ENCODE measurements at regions of chr2 and their contacts with region 1.

Region 1: DNA sequence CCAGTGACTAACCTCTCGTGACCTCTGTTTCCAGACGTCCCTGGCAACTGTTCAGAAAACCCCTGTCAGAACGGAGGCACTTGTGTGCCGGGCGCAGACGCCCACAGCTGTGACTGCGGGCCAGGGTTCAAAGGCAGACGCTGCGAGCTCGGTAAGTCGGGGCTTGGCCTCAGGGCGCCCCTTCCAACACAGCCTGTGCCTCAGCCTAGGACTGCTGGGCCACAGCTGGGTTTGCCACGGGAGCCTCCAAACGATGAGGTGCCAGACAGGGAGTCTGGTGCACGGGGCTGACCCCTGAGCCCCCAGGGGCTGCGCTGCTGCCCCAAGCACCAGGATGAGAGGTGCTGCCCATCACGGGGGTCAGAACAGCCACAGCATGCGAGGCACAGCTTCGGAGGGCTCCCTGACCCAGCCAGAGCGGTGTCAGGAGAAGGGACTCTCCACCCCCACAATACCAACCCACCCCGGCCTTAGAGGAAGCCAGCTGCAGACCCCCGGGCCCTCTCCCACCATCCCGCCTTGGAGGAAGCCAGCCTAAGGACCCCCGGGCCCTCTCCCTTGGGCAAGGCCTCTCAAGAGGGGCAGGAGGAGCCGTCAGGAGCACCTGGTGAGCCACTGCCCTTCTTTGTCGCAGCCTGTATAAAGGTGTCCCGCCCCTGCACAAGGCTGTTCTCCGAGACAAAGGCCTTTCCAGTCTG is 20.3 kb downstream of the MTERF4 start:
- DNase-seq: no peak
- H3K4me3 ChIP-seq: no peak overlapping the region
- H3K27ac ChIP-seq: no peak overlapping the region
- H3K4me1 ChIP-seq: no peaks in the 10 kb centered on the region
- H3K27me3 ChIP-seq: no peaks in the 10 kb centered on the region
- CTCF ChIP-seq: no peak

Region 2: DNA sequence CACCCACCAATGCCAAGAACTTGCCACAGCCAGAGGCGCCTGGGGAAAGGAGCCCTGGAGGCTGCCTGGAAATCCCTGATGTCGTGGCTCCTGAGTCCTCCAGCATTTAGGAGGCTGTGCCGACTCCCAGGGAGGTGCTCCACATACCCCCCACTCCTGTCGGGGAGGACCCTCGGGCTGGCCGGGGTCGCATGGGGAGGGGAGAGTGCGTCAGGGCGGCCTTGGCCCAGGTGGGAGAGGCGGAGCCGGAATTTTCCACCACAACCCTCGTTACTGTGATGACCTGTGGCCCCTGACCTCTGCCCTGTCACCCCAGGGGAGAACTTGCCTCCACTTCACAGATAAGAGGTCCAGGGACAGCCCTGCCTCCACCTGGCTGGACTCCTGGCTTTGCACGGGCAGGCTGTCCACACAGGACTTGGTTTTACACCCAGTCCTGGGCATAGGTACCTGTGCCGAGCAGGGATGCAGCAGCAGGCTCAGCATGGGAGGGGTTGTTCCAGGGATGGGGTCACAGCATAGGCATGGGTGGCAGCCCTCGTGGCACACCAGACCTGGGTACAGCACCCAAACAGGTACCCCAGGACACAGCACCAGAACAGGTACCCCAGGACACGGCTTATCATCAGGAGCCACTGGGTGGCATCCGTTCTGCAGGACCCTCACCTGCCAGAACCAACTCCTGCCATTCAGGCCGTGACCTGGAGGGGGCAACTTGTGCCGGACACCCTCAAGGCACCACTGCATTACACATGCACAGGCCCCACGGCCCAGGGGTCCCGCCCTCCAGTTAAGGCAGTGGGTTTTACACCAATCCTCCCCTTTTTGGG is 225.4 kb before region 1 on chr2:
- CTCF ChIA-PET with region 1: no interaction called
- POLR2A ChIA-PET with region 1: no interaction called
- intact Hi-C with region 1: loop called (anchors 2 kb)
- DNase-seq: peak in 1 of 2 experiments; percentile 71
- H3K4me3 ChIP-seq: no peak overlapping the region
- H3K27ac ChIP-seq: no peak overlapping the region
- H3K4me1 ChIP-seq: 0 out of 2 replicates have a peak, but pooled peaks cover 7% of the 10 kb centered on the region
- H3K27me3 ChIP-seq: no peaks in the 10 kb centered on the region
- CTCF ChIP-seq: peak; percentile 59; the same call in 1 of the 2 replicates

Region 3: DNA sequence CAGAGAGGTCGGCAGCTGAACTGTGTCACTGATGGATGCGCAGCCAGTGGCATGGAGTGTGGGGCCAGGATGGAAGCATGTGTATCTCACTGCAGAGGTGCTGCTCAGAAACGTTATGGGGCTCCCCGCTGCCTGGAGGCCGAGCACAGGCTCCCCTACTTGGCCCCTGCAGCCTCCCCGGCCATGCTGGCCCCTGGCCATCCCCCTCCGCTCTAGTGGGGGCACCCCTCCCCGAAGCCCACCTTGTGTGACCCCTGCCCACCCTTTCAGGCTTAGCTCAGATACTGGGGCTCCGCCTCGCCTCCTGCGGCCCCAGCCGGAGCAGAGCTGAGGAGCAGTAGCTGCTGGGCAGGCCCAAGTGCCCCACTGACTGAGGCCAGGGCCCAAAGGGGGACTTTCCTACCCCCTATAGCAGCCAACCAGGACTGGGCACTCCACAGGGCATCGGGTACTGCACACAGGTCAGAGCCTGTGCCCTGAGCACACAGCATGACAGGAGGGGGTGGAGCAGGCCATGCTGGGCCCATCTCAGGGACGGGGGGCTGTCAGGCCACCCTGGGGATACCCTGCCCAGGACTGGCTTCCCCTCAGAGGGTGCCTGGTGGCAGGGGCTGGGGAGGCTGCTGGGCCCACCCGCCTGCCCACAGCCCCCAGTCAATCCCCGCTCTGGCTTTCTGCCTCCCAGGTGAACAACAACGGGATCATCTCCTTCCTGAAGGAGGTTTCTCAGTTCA is 52.0 kb before region 1 on chr2:
- CTCF ChIA-PET with region 1: no interaction called
- POLR2A ChIA-PET with region 1: no interaction called
- intact Hi-C with region 1: no loop called
- DNase-seq: no peak
- H3K4me3 ChIP-seq: no peak overlapping the region
- H3K27ac ChIP-seq: no peak overlapping the region
- H3K4me1 ChIP-seq: no peaks in the 10 kb centered on the region
- H3K27me3 ChIP-seq: 0 out of 2 replicates have a peak, but pooled peaks cover 4% of the 10 kb centered on the region
- CTCF ChIP-seq: no peak

Region 4: GRCh38 chr2:241064008-241064801 is 17.6 kb before region 1 on chr2:
- CTCF ChIA-PET with region 1: interaction called, 9 read pairs
- POLR2A ChIA-PET with region 1: interaction called, 17 read pairs
- intact Hi-C with region 1: no loop called
- DNase-seq: peak; percentile 46 to 84
- H3K4me3 ChIP-seq: peak overlapping the region; percentile 32; the same call in 1 of the 2 replicates
- H3K27ac ChIP-seq: no peak overlapping the region
- H3K4me1 ChIP-seq: peaks cover 7% of the 10 kb centered on the region
- H3K27me3 ChIP-seq: peaks cover 25% of the 10 kb centered on the region
- CTCF ChIP-seq: no peak

Region 5: GRCh38 chr2:241617431-241618154 is 535.8 kb after region 1 on chr2:
- CTCF ChIA-PET with region 1: no interaction called
- POLR2A ChIA-PET with region 1: no interaction called
- intact Hi-C with region 1: no loop called
- DNase-seq: no peak
- H3K4me3 ChIP-seq: no peak overlapping the region
- H3K27ac ChIP-seq: no peak overlapping the region
- H3K4me1 ChIP-seq: no peaks in the 10 kb centered on the region
- H3K27me3 ChIP-seq: no peaks in the 10 kb centered on the region
- CTCF ChIP-seq: no peak

Region 6: DNA sequence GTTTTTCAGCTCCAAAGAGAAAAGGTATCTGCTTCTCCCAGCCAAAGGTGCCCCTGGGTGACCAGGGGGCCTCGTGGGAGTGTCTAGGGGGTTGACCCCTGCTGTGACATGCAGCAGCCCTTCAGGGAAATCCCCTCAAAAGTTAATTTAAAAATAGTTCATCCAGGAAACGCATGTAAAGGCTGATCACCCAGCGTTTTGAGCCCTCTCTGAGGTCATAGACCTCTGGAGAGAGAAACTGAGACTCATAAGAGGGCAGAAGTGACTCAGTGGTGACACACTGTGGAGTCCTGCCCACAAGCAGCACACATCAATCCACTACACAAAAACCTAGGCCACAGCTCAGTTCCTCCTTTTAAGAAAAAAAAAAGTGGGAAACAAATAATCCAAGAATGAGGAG is 706.8 kb after region 1 on chr2:
- CTCF ChIA-PET with region 1: interaction called, 11 read pairs
- POLR2A ChIA-PET with region 1: no interaction called
- intact Hi-C with region 1: no loop called
- DNase-seq: no peak
- H3K4me3 ChIP-seq: no peak overlapping the region
- H3K27ac ChIP-seq: no peak overlapping the region
- H3K4me1 ChIP-seq: peaks cover 8% of the 10 kb centered on the region
- H3K27me3 ChIP-seq: peaks cover 9% of the 10 kb centered on the region; the same call in 1 of the 2 replicates
- CTCF ChIP-seq: no peak

Measured in PC-9 (cell line).